Activated CD4-positive, alpha-beta T cell treated with anti-CD3 and anti-CD28 coated beads, Interleukin-2, amount 10 ng/mL, durations not matched to agents 24 days and 14 days (primary cell): ENCODE measurements at regions of chr6 and their contacts with region 1.

Region 1: GRCh38 chr6:87701676-87702588 is at the start of gene AKIRIN2:
- DNase-seq: peak; percentile 99
- H3K4me3 Mint-ChIP-seq: peak within 1 kb of the TSS; percentile 97
- H3K27ac Mint-ChIP-seq: peak within 1 kb of the TSS; percentile 97
- H3K4me1 Mint-ChIP-seq: peaks cover 31% of the 10 kb centered on the region
- H3K27me3 Mint-ChIP-seq: no peaks in the 10 kb centered on the region
- total RNA-seq, gene AKIRIN2: 39.6 and 43.8 TPM in 2 replicates

Region 2: DNA sequence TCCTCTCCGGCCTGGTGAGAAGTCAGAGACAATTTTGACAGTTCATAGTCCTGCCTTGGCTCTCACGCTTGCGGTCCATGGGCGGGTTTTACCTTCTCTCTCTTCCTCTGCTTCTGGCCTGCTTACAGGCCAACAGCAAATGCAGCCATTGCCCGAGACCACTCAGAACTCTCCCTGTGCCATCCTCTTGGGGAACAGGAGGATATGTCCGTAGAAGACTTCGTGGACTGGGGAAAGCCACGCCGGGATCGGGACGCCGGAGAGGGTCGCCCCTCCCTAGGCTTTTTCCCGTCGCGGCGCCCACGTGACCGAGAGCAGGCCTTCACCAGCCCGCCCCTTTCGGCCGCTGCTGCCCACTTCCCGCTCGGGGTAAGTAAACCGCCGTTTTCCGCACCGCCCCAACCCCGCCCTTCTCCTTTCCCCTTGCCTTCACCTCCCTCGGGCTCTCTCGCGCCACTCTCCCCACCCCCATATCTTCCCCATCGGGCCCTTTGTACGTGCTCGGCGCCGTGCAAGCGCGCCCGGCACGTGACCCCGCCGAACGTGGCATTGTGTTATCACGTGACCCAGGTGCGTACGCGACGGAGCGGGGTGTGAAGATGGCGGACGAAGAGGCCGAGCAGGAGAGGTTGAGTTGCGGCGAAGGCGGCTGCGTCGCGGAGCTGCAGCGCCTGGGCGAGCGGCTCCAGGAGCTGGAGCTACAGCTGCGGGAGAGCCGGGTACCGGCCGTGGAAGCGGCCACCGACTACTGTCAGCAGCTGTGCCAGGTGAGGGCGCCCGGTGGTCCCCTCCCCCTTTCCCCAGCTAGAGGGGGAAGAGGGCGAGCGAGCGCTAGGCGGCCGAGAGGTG is 546.7 kb before region 1 on chr6 and contains the start of gene ZNF292:
- intact Hi-C with region 1: loop called (anchors 1 kb)
- DNase-seq: peak; percentile 99
- H3K4me3 Mint-ChIP-seq: peak within 1 kb of the TSS; percentile 88
- H3K27ac Mint-ChIP-seq: peak within 1 kb of the TSS; percentile 95
- H3K4me1 Mint-ChIP-seq: peaks cover 48% of the 10 kb centered on the region
- H3K27me3 Mint-ChIP-seq: peaks cover 2% of the 10 kb centered on the region
- total RNA-seq, gene ZNF292: 61.2 and 63.7 TPM in 2 replicates

Region 3: DNA sequence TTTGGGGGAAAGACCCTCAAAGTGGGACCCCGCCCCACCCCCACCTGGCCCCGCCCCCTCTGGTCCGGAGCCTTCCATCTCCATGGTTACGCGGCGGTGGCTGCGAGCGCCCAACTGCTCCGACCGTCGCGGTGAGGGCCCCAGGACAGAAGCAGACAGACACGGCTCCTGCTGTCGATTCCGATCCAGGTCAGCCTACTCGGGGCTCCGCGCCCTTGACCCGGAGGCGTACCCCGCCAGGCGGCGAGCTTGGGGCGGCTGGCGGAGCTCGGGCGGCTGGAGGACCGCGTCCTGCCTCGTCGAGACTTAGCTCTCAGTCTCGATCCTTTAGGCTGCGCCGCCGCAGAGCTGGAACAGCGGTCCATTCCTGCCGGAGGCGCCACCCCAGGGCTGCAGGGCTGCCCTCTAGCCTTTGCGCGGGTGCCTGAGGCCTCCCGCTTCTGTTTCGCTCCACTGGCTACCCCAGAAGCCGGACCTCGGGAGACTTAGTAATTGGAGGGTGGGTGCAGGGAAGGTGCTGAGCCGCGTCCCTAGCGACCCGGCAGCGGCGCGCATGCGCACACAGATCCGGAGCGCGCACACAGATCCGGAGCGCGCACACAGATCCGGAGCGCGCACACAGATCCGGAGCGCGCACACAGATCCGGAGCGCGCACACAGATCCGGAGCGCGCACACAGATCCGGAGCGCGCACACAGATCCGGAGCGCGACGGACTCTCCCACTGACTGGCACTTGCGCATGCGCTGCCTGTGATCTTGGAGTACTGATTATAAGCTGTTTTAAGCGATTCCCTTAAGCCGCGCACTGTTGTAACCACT is 293.8 kb before region 1 on chr6 and contains the start of gene CFAP206:
- intact Hi-C with region 1: loop called (anchors 5 kb)
- DNase-seq: peak; percentile 91
- H3K4me3 Mint-ChIP-seq: peak within 1 kb of the TSS; percentile 86
- H3K27ac Mint-ChIP-seq: peak within 1 kb of the TSS; percentile 59
- H3K4me1 Mint-ChIP-seq: peaks cover 3% of the 10 kb centered on the region
- H3K27me3 Mint-ChIP-seq: peaks cover 25% of the 10 kb centered on the region
- total RNA-seq, gene CFAP206: not detected in 2 replicates

Region 4: GRCh38 chr6:87589693-87590549 is 112.0 kb before region 1 on chr6 and contains the starts of genes ORC3 and RARS2:
- intact Hi-C with region 1: loop called (anchors 1 kb)
- DNase-seq: peak; percentile 99
- H3K4me3 Mint-ChIP-seq: peak within 1 kb of the TSS; percentile 92
- H3K27ac Mint-ChIP-seq: peak within 1 kb of the TSS; percentile 84
- H3K4me1 Mint-ChIP-seq: peaks cover 44% of the 10 kb centered on the region
- H3K27me3 Mint-ChIP-seq: no peaks in the 10 kb centered on the region
- total RNA-seq, gene ORC3: 35.5 and 38.6 TPM in 2 replicates
- total RNA-seq, gene RARS2: 22.6 and 22.7 TPM in 2 replicates

Region 5: DNA sequence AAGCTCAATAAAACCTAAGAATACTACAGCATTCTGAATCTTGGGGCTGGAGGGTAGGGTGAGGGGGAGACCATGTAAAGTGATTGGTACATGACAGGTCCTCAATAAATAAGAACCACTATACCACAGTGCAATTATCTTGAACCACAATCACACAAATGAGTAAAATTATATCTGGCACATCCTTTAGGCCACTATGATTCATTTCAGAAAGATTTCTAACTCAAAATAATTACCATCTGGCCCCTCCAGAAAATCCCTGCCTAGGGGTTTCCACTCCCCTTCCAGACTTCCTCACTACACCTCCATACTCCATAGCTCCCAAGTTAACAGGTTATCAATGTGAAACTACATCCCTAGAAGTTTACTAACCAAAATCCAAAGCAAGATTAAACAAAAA is 19.6 kb before region 1 on chr6:
- intact Hi-C with region 1: loop called (anchors 2 kb)
- DNase-seq: no peak
- H3K4me3 Mint-ChIP-seq: no peak overlapping the region
- H3K27ac Mint-ChIP-seq: peak overlapping the region; percentile 47
- H3K4me1 Mint-ChIP-seq: peaks cover 33% of the 10 kb centered on the region
- H3K27me3 Mint-ChIP-seq: no peaks in the 10 kb centered on the region

Region 6: GRCh38 chr6:87731818-87732661 is 30.1 kb after region 1 on chr6:
- intact Hi-C with region 1: loop called (anchors 1 kb)
- DNase-seq: peak; percentile 67
- H3K4me3 Mint-ChIP-seq: peak overlapping the region; percentile 42
- H3K27ac Mint-ChIP-seq: peak overlapping the region; percentile 60
- H3K4me1 Mint-ChIP-seq: peaks cover 15% of the 10 kb centered on the region
- H3K27me3 Mint-ChIP-seq: peaks cover 16% of the 10 kb centered on the region

Region 7: DNA sequence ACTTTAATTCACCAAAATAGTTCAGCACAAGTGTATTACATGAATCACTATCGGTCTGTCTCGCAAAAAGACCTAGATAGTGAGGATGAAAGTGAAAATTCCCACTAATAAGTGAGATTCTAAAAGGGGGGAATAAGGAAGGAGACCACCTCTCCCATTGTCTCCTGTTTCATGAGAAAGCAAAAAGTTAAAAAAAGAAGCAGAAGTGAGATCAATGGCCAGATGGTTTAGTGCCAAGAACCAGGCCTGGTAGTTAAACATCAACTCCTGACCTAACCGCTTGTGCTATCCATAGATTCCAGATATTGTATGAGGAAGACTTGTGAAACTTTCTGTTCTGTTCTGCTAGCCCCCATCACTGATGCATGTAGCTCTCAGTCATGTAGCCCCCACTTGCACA is 968.4 kb after region 1 on chr6:
- intact Hi-C with region 1: no loop called
- DNase-seq: no peak
- H3K4me3 Mint-ChIP-seq: no peak overlapping the region
- H3K27ac Mint-ChIP-seq: no peak overlapping the region
- H3K4me1 Mint-ChIP-seq: no peaks in the 10 kb centered on the region
- H3K27me3 Mint-ChIP-seq: no peaks in the 10 kb centered on the region

Region 8: DNA sequence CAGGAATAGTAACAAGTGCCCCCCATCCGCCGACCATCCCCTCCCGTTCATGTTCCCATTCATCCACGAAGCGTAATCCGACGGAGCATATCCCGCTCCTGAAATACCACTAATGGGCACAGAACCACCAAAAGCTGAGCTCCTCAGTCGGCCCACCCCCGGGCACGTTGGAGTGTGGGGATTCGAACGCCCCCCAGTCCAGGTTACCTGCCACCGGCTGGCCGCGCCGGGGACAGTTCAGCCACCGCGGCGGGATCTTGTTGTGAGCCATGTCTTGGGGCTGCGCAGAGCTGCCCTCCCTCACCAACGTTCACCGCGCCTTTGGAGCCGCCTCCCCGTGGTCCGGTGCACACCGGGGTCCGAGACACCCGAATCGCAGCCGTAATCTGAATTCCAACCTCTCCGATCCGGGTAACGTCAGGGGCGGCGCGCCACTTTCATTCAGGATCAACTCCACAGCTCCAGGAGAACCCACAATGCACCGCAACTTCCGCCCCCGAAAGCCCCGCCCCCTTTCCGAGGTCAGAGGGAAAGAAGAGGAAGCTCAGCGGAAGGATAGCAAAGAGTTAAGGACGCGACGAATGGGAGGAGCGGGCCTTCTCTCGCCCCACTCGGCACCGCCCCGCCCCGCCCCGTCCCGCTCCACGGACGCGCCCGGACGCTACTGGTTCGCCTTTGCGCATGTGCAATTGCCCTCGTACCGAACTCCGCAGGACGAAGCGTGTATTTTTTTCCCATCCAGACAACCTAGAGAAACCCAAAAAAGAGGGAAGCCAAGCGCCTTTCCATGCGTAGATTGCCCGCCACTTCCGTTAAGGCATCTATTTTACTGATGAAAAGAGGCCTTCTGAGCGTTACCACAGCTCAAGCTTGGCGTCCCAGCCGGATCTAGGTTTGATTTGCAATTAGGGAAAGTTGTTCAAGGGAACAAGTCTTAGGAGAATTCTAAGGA is 1261.5 kb after region 1 on chr6 and contains the start of gene RNGTT:
- intact Hi-C with region 1: loop called (anchors 1 kb)
- DNase-seq: peak; percentile 99
- H3K4me3 Mint-ChIP-seq: peak within 1 kb of the TSS; percentile 98
- H3K27ac Mint-ChIP-seq: peak within 1 kb of the TSS; percentile 94
- H3K4me1 Mint-ChIP-seq: peaks cover 25% of the 10 kb centered on the region
- H3K27me3 Mint-ChIP-seq: peaks cover 4% of the 10 kb centered on the region
- total RNA-seq, gene RNGTT: 23.8 and 25.9 TPM in 2 replicates